Calu3 (cell line): ENCODE measurements at regions of chr22 and their contacts with region 1.

Region 1: DNA sequence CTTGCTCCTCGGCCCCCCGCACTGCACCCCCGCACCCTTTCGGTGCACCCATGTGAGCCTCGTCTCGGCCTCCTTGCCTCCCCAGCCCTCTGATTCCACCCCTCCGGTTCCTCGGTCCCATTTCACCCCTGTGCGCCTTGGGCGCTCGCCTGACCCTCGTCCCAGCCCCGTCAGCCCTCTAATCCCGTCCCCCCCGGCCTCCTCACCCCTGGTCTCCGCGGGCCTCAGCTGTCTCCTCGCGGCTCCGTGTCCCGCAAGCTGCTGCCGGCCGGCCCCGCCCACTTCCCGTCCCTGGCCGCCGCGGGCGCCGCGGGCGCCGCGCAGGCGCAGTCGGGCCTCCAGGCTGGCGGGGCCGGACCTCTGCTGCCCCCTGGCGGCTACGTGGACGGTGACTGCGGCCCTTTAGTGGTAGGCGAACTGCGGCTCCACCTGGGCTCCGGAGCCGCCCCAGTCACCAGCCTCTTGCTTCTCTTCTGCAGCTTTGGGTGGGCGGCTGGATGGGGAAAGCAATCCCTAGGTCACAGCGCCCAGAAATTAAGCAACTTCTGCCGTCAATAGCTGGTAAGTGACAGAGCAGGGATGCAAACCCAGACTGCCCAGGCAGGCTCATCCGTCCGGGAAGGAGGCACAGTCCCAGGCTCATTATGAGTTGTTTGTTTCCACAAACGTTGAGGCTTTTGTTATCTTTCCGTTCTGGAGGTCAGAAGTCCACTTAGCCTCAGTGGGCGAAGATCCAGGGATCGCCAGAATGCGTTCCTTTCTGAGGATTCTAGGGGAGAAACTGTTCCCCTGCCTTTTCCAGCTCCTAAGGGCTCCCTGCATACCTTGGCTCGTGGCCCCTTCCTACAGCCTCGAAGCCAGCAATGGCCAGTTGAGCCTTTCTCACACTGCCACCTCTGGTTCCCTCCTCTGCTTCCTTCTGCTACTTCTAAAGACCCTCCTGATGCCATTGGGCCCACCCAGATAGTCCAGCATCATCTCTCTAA is at the start of gene PPM1F:
- DNase-seq: peak; percentile 93
- H3K4me3 Mint-ChIP-seq: peak within 1 kb of the TSS; percentile 82
- H3K27ac Mint-ChIP-seq: peak within 1 kb of the TSS; percentile 56
- H3K4me1 Mint-ChIP-seq: peaks cover 2% of the 10 kb centered on the region
- H3K27me3 Mint-ChIP-seq: no peaks in the 10 kb centered on the region
- CTCF ChIP-seq: peak; percentile 88
- total RNA-seq, gene PPM1F: 19.0 and 19.8 TPM in 2 replicates

Region 2: GRCh38 chr22:21712894-21713712 is 239.8 kb before region 1 on chr22:
- CTCF ChIA-PET with region 1: interaction called, 11 read pairs
- intact Hi-C with region 1: loop called (anchors 2 kb)
- DNase-seq: peak; percentile 69
- H3K4me3 Mint-ChIP-seq: peak overlapping the region; percentile 32
- H3K27ac Mint-ChIP-seq: no peak overlapping the region
- H3K4me1 Mint-ChIP-seq: peaks cover 10% of the 10 kb centered on the region
- H3K27me3 Mint-ChIP-seq: no peaks in the 10 kb centered on the region
- CTCF ChIP-seq: peak; percentile 79

Region 3: GRCh38 chr22:21849489-21849888 is 103.4 kb before region 1 on chr22:
- CTCF ChIA-PET with region 1: interaction called, 11 read pairs
- intact Hi-C with region 1: no loop called
- DNase-seq: no peak
- H3K4me3 Mint-ChIP-seq: no peak overlapping the region
- H3K27ac Mint-ChIP-seq: no peak overlapping the region
- H3K4me1 Mint-ChIP-seq: no peaks in the 10 kb centered on the region
- H3K27me3 Mint-ChIP-seq: no peaks in the 10 kb centered on the region
- CTCF ChIP-seq: no peak

Region 4: GRCh38 chr22:21938071-21938822 is 14.6 kb before region 1 on chr22:
- CTCF ChIA-PET with region 1: interaction called, 19 read pairs
- intact Hi-C with region 1: no loop called
- DNase-seq: peak; percentile 94
- H3K4me3 Mint-ChIP-seq: peak overlapping the region; percentile 79
- H3K27ac Mint-ChIP-seq: peak overlapping the region; percentile 55
- H3K4me1 Mint-ChIP-seq: peaks cover 31% of the 10 kb centered on the region
- H3K27me3 Mint-ChIP-seq: no peaks in the 10 kb centered on the region
- CTCF ChIP-seq: peak; percentile 87